Activated CD4-positive, alpha-beta T cell treated with anti-CD3 and anti-CD28 coated beads for 36 hours (primary cell): ENCODE measurements at regions of chr22 and their contacts with region 1.

Region 1: DNA sequence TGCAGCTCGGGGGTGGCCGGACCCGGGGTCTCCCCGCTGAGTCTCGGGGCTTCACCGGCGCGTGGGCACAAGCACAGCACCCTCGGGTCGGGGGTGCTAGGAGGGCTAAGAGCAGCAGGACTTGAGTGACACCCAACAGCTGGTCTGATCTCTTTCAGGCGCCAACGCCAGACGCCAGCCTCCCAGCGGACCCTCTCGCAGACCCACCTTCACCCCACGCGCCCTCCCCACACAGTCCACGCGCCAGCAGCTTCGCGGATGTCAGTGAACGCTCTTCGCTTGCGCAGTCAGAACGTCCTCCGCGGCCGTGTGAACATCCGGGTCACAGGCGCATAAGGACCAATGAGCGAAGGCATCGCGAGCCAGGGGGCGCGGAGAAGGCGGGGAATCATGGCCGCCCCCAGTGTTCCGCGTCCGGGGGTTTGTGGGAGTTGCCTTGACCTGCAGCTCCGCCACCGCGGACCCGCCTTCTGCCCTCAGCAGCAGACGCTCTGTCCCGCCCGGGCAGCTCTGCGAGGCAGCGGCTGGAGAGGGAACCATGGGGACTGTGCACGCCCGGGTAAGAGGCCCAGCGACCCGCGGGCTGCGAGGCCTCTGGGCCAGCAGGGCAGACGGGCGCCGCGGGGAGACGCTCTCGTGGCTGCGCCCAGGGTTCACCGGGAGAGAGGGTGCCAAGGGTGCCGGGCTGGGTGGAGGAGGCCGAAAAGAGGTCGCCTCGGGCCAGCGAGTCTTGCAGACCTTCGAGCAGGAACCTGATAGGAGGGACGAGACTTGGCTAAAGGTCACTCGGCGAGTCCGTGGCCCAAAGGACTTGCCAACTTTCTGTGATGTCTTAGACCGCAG is at the start of gene SAMM50:
- DNase-seq: peak; percentile 95
- ATAC-seq: peak; percentile 97
- H3K4me3 Mint-ChIP-seq: peak within 1 kb of the TSS; percentile 99
- H3K27ac Mint-ChIP-seq: peak within 1 kb of the TSS; percentile 96
- H3K4me1 Mint-ChIP-seq: peaks cover 25% of the 10 kb centered on the region
- H3K27me3 Mint-ChIP-seq: no peaks in the 10 kb centered on the region
- total RNA-seq, gene SAMM50: 35.2 to 43.8 TPM

Region 2: DNA sequence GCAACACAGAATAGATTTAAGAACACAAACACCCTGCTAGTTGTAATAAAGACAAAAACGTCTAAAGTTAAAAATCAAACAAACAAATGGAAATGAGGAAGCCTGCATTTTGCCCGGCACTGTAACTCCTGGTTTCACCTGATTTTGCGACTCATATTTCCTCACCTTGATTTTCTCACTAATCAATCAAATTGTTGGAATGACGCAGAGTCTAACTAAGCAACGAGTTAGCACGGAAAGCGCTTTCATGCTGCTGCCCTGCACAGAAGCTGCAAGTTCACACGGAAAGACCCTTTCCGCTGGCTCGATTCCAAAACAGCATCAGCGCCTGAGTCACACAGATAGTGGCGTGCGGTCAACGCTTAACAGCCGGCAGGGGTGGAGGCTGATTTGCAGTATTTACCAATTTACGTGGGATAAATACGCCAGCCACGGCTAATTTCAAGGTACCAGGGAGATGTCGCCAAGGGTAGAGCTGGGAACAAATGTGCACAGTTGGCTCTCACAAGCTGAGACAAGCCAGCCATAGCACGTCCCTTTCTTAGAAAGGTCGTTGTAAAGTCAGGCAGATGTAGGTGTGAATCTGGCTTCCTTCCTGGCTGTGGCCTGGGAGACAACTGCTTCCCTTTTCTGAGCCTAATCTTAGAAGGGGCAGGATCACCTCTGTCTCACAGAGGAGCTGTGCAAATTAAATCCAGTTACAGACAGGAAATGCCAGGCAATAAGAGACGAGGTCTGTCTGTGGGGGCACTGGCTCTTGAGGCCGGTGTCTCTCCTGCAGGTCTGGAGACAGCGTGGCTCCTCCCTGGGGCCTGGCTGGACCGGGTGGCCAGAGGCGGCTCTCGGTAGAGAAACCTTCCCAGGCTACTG is 691.4 kb before region 1 on chr22:
- CTCF ChIA-PET with region 1: no interaction called
- POLR2A ChIA-PET with region 1: no interaction called
- intact Hi-C with region 1: loop called in 1 of 2 experiments (anchors 5 kb)
- DNase-seq: peak; percentile 93
- ATAC-seq: peak; percentile 94
- H3K4me3 Mint-ChIP-seq: peak overlapping the region; percentile 49
- H3K27ac Mint-ChIP-seq: peak overlapping the region; percentile 16
- H3K4me1 Mint-ChIP-seq: peaks cover 26% of the 10 kb centered on the region
- H3K27me3 Mint-ChIP-seq: peaks cover 3% of the 10 kb centered on the region

Region 3: GRCh38 chr22:43435851-43436811 is 519.1 kb before region 1 on chr22:
- CTCF ChIA-PET with region 1: no interaction called
- POLR2A ChIA-PET with region 1: no interaction called
- intact Hi-C with region 1: no loop called
- DNase-seq: no peak
- ATAC-seq: no peak
- H3K4me3 Mint-ChIP-seq: no peak overlapping the region
- H3K27ac Mint-ChIP-seq: no peak overlapping the region
- H3K4me1 Mint-ChIP-seq: no peaks in the 10 kb centered on the region
- H3K27me3 Mint-ChIP-seq: peaks cover 11% of the 10 kb centered on the region

Region 4: DNA sequence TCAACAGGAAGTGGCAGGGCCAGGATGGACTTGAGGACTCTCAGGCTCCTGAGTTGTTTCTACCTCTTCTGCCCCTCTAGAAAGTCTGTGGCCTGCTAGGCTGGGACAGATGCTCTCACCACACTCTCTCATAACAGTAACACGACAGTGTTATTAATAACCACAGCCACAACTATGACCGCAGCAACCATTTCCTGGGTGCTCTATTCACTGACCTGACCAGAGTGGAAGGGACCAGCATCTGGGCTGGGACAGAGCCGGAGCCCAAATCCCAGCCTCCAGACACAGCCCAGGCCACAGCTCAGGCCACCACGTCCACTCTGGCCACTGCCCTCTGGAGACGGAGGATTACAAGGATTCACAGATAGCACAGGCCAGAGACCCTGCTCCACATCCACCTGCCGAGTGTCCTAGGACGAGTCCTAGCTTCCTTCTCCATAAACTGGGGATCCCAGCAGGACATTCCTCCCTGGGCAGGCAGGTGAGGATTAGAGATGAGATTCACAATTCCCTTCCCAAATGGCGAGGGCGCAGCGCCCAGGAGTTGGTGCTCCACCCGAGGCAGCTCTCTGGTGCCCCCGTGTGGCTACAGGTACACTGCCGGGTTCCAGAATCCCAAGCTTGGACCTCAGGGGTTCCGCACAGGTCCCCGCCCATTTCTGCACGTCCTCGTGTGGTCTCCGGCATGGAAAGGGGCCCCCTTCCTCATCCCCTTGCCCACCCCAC is 70.5 kb before region 1 on chr22:
- CTCF ChIA-PET with region 1: no interaction called
- POLR2A ChIA-PET with region 1: no interaction called
- intact Hi-C with region 1: loop called in 1 of 2 experiments (anchors 5 kb)
- DNase-seq: peak; percentile 77
- ATAC-seq: peak; percentile 31
- H3K4me3 Mint-ChIP-seq: no peak overlapping the region
- H3K27ac Mint-ChIP-seq: no peak overlapping the region
- H3K4me1 Mint-ChIP-seq: no peaks in the 10 kb centered on the region
- H3K27me3 Mint-ChIP-seq: peaks cover 15% of the 10 kb centered on the region

Region 5: DNA sequence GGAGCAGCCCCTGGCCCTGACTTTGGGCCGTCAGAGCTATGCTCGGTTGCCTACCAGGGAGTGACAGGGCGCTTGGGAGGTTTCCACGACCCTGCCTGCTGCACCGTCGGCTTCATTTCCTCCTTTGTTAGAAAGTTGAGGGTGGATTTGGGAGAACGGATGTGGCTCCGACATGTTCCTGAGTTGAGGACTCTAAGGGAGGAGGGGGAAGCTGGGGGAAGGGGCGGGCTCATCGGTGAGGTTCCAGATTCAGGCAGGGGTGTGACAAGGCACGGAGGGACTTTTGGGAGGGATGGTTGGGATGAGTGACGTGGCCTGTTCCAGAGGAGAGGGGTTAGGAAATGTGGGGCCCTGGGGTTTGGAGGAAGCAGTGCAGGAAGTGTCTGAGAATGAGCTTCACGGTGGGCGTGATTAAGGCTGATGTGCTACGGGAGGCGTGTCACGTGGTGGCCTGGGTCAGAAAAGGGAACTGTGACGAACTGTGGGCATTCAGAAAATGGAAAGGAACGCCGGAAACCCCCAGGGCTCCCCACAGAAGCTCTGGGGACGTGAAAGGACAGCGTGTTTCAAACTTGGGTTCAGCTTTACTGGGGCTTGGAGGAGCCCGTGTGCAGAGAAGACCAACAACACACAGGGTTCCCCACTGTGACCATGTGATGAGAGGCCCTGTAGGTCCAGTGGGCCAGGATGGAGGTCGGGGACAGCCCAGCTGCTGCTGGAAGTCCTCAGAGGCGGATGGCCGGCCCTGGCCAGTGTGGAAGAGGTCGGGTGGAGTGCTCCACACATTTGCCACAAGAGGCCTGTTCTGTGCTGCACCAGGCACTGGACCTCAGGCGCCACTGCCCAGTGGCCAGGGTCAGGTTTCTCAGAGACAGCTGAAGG is 71.6 kb after region 1 on chr22:
- CTCF ChIA-PET with region 1: interaction called, 3 read pairs
- POLR2A ChIA-PET with region 1: no interaction called
- intact Hi-C with region 1: loop called in 1 of 2 experiments (anchors 1 kb)
- DNase-seq: peak; percentile 86
- ATAC-seq: peak; percentile 76
- H3K4me3 Mint-ChIP-seq: peak overlapping the region; percentile 78
- H3K27ac Mint-ChIP-seq: peak overlapping the region; percentile 93
- H3K4me1 Mint-ChIP-seq: peaks cover 41% of the 10 kb centered on the region
- H3K27me3 Mint-ChIP-seq: peaks cover 9% of the 10 kb centered on the region

Region 6: DNA sequence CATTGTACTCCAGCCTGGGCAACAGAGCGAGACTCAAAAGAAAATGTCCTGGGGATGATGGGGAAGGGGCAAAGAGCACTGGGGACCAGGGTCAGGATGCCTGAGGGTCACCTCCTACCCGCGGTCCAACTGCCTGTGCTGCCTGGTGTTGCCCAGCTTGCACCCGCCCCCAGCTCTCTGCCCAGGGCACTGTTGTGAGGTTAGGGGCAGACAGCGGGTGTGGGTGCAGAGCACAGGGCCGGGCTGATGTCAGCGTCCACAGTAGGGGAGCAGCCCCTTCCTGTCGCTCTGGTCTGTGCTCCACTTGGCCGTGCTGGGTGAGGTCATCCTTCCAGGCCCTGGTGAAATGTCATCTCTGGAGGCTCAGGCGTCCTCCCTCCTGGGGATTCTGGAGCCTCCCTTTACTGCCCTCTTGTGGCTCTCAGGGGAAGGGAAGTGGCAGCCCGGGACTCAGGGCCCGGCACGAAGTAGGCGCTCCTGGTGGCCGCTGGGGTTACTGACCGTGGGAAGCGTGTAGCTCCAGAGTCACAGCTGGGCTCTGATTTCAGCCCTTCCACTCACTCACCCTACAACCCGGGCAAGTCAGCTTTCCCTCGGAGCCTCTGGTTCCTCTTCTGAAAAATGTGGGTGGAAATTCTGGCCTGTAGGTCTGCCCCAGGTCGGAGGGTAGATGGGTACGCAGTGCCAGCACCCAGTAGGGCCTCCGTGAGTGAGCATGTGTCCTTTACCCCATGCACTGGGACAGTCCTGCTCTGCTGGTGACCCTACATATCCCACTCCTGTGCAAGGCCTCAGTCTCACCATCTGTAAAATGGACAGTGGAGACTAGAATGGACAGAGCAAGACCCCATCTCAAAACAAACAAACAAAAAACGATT is 729.5 kb after region 1 on chr22:
- CTCF ChIA-PET with region 1: no interaction called
- POLR2A ChIA-PET with region 1: no interaction called
- intact Hi-C with region 1: loop called in 1 of 2 experiments (anchors 1 kb)
- DNase-seq: peak; percentile 94
- ATAC-seq: peak; percentile 81
- H3K4me3 Mint-ChIP-seq: peak overlapping the region; percentile 15
- H3K27ac Mint-ChIP-seq: peak overlapping the region; percentile 87
- H3K4me1 Mint-ChIP-seq: peaks cover 52% of the 10 kb centered on the region
- H3K27me3 Mint-ChIP-seq: no peaks in the 10 kb centered on the region